ENCODE measurements at regions of chr4 and their contacts with region 1.

Region 1: DNA sequence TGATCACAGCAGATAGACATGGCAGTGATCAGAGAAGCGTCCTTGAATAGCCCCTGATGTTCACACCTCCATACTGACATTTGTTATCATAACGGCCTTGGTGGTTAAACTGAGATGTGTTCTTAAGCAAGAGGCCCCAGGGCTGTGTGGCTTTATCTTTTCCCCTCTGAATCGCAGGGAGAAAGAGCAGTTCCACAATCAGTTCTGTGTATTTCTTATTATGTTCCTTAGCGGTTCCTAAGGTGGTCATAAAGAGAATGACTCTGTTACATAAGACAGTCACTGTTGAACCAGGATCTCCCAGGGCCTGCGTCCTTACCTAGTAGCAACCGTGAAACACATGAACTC is 52.8 kb upstream of the CBR4 start:
- DNase-seq: no peak
- H3K4me3 ChIP-seq: no peak overlapping the region
- H3K27ac ChIP-seq: no peak overlapping the region
- H3K4me1 ChIP-seq: no peaks in the 10 kb centered on the region
- H3K27me3 ChIP-seq: no peaks in the 10 kb centered on the region
- CTCF ChIP-seq: no peak
- EP300 ChIP-seq: no peak
- POLR2A ChIP-seq: no peak
- RAD21 ChIP-seq: no peak

Region 2: GRCh38 chr4:169045862-169046584 is 16.8 kb before region 1 on chr4:
- CTCF ChIA-PET with region 1: interaction called, 18 read pairs
- POLR2A ChIA-PET with region 1: interaction called, 5 read pairs
- DNase-seq: no peak
- H3K4me3 ChIP-seq: no peak overlapping the region
- H3K27ac ChIP-seq: no peak overlapping the region
- H3K4me1 ChIP-seq: peaks cover 0 to 6% (median 4%) of the 10 kb centered on the region in 4 experiments; a peak in 3 of 7 replicates
- H3K27me3 ChIP-seq: no peaks in the 10 kb centered on the region
- CTCF ChIP-seq: peak; percentile 34 to 73 (median 50)
- EP300 ChIP-seq: no peak
- POLR2A ChIP-seq: no peak
- RAD21 ChIP-seq: peak; percentile 73 to 82

Measured in H1 (cell line).